H1 (cell line): ENCODE measurements at regions of chr11 and their contacts with region 1.

Region 1: GRCh38 chr11:118895142-118896039 is 11.7 kb downstream of the CXCR5 start:
- DNase-seq: no peak
- H3K4me3 ChIP-seq: no peak overlapping the region
- H3K27ac ChIP-seq: no peak overlapping the region; the same call in 1 of the 2 replicates
- H3K4me1 ChIP-seq: peaks cover 3 to 44% (median 26%) of the 10 kb centered on the region in 4 experiments
- H3K27me3 ChIP-seq: peaks cover 0 to 3% (median 0%) of the 10 kb centered on the region in 4 experiments; a peak in 1 of 7 replicates
- CTCF ChIP-seq: no peak
- EP300 ChIP-seq: no peak
- POLR2A ChIP-seq: no peak; a peak in 2 of 3 replicates
- RAD21 ChIP-seq: no peak

Region 2: GRCh38 chr11:118878163-118878563 is 17.2 kb before region 1 on chr11:
- CTCF ChIA-PET with region 1: interaction called, 6 read pairs
- POLR2A ChIA-PET with region 1: interaction called, 33 read pairs
- DNase-seq: no peak
- H3K4me3 ChIP-seq: no peak overlapping the region
- H3K27ac ChIP-seq: no peak overlapping the region
- H3K4me1 ChIP-seq: no peaks in the 10 kb centered on the region; a peak in 1 of 7 replicates
- H3K27me3 ChIP-seq: no peaks in the 10 kb centered on the region
- CTCF ChIP-seq: no peak
- EP300 ChIP-seq: no peak
- POLR2A ChIP-seq: no peak
- RAD21 ChIP-seq: no peak

Region 3: DNA sequence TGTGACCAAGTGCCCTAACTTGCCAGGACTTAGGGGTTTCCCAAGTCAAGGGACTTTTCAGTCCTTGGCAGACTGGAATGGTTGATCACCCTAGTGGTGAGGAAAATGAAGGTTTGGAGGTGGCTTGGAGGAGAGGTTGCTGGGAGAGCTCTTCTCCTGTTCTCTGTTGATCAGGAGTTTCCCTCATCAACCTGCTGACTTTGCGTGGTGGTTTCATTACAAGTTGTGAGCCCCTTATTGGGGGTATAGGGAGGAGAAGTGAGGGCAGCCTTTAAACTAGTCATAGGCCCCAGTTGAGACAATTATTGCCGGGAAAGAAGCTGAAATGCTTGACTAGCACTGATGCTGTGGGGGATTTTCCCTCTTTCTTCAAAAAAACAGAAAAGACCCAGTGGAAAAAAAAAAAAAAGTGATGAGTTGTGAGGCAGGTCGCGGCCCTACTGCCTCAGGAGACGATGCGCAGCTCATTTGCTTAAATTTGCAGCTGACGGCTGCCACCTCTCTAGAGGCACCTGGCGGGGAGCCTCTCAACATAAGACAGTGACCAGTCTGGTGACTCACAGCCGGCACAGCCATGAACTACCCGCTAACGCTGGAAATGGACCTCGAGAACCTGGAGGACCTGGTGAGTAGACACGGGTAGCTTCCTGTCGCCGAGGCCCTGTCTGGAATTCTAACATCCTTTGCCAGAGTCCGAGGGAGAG is 11.9 kb before region 1 on chr11 and contains the start of gene CXCR5:
- CTCF ChIA-PET with region 1: interaction called, 6 read pairs
- POLR2A ChIA-PET with region 1: interaction called, 33 read pairs
- DNase-seq: no peak
- H3K4me3 ChIP-seq: no peak within 1 kb of the TSS
- H3K27ac ChIP-seq: no peak within 1 kb of the TSS
- H3K4me1 ChIP-seq: peaks cover 0 to 14% (median 9%) of the 10 kb centered on the region in 4 experiments; a peak in 6 of 7 replicates
- H3K27me3 ChIP-seq: no peaks in the 10 kb centered on the region; a peak in 1 of 7 replicates
- CTCF ChIP-seq: peak in 1 of 3 experiments; percentile 10; a peak in 1 of 4 replicates
- EP300 ChIP-seq: no peak
- POLR2A ChIP-seq: no peak
- RAD21 ChIP-seq: 0 out of 4 replicates have a peak, but pooled peaks of 1 of the 2 experiments have one; percentile 9
- total RNA-seq, gene CXCR5: not detected in 2 replicates

Region 4: GRCh38 chr11:118907051-118908042 is 12.0 kb after region 1 on chr11:
- CTCF ChIA-PET with region 1: interaction called, 23 read pairs
- POLR2A ChIA-PET with region 1: interaction called, 61 read pairs
- DNase-seq: peak in 1 of 2 experiments; percentile 97
- H3K4me3 ChIP-seq: peak overlapping the region in 3 of 4 experiments; percentile 12 to 38 (median 15); a peak in 4 of 8 replicates
- H3K27ac ChIP-seq: peak overlapping the region; percentile 46; the same call in 1 of the 2 replicates
- H3K4me1 ChIP-seq: peaks cover 4 to 39% (median 31%) of the 10 kb centered on the region in 4 experiments
- H3K27me3 ChIP-seq: no peaks in the 10 kb centered on the region
- CTCF ChIP-seq: peak in 2 of 3 experiments; percentile 95 to 97; a peak in 3 of 4 replicates
- EP300 ChIP-seq: no peak
- POLR2A ChIP-seq: no peak; a peak in 1 of 3 replicates
- RAD21 ChIP-seq: peak; percentile 98 to 100

Region 5: GRCh38 chr11:118921929-118922744 is 26.7 kb after region 1 on chr11:
- CTCF ChIA-PET with region 1: interaction called, 9 read pairs
- POLR2A ChIA-PET with region 1: interaction called, 61 read pairs
- DNase-seq: peak in 1 of 2 experiments; percentile 73
- H3K4me3 ChIP-seq: peak overlapping the region; percentile 10 to 93 (median 33); a peak in 6 of 8 replicates
- H3K27ac ChIP-seq: peak overlapping the region; percentile 62; the same call in 1 of the 2 replicates
- H3K4me1 ChIP-seq: peaks cover 28 to 75% (median 64%) of the 10 kb centered on the region in 4 experiments
- H3K27me3 ChIP-seq: no peaks in the 10 kb centered on the region; a peak in 1 of 7 replicates
- CTCF ChIP-seq: no peak
- EP300 ChIP-seq: peak in 1 of 2 experiments; percentile 38; a peak in 1 of 3 replicates
- POLR2A ChIP-seq: no peak; a peak in 1 of 3 replicates
- RAD21 ChIP-seq: peak; percentile 18; a peak in 1 of 4 replicates

Region 6: GRCh38 chr11:118928108-118928870 is 32.9 kb after region 1 on chr11:
- CTCF ChIA-PET with region 1: interaction called, 13 read pairs
- POLR2A ChIA-PET with region 1: interaction called, 16 read pairs
- DNase-seq: peak in 1 of 2 experiments; percentile 99
- H3K4me3 ChIP-seq: peak overlapping the region; percentile 86 to 95 (median 88)
- H3K27ac ChIP-seq: no peak overlapping the region
- H3K4me1 ChIP-seq: peaks cover 7 to 31% (median 20%) of the 10 kb centered on the region in 4 experiments
- H3K27me3 ChIP-seq: peaks cover 0 to 6% (median 0%) of the 10 kb centered on the region in 4 experiments; a peak in 3 of 7 replicates
- CTCF ChIP-seq: peak; percentile 80 to 92 (median 88)
- EP300 ChIP-seq: no peak
- POLR2A ChIP-seq: no peak
- RAD21 ChIP-seq: peak; percentile 64 to 76